ENCODE measurements at regions of chr16 and their contacts with region 1.

Region 1: GRCh38 chr16:15487336-15488284 is 53.2 kb downstream of the BMERB1 start:
- DNase-seq: no peak
- H3K4me3 ChIP-seq: no peak overlapping the region
- H3K27ac ChIP-seq: peak overlapping the region in 1 of 2 donors; percentile 83
- H3K4me1 ChIP-seq: peaks cover 5 to 23% of the 10 kb centered on the region in 2 donors
- H3K27me3 ChIP-seq: no peaks in the 10 kb centered on the region
- CTCF ChIP-seq: no peak

Region 2: GRCh38 chr16:15434425-15435215 is 53.0 kb before region 1 on chr16 and contains the start of gene BMERB1:
- intact Hi-C with region 1: loop called (anchors 2 kb)
- DNase-seq: peak; percentile 18 to 90
- H3K4me3 ChIP-seq: peak within 1 kb of the TSS; percentile 52 to 94
- H3K27ac ChIP-seq: peak within 1 kb of the TSS; percentile 82
- H3K4me1 ChIP-seq: peaks cover 0 to 10% of the 10 kb centered on the region in 2 donors
- H3K27me3 ChIP-seq: no peaks in the 10 kb centered on the region
- CTCF ChIP-seq: no peak
- total RNA-seq, gene BMERB1: 45.4 TPM

Region 3: GRCh38 chr16:15440852-15441251 is 46.8 kb before region 1 on chr16:
- intact Hi-C with region 1: loop called (anchors 2 kb)
- DNase-seq: no peak
- H3K4me3 ChIP-seq: no peak overlapping the region
- H3K27ac ChIP-seq: peak overlapping the region; percentile 27 to 80
- H3K4me1 ChIP-seq: peaks cover 0 to 26% of the 10 kb centered on the region in 2 donors
- H3K27me3 ChIP-seq: no peaks in the 10 kb centered on the region
- CTCF ChIP-seq: no peak

Region 4: DNA sequence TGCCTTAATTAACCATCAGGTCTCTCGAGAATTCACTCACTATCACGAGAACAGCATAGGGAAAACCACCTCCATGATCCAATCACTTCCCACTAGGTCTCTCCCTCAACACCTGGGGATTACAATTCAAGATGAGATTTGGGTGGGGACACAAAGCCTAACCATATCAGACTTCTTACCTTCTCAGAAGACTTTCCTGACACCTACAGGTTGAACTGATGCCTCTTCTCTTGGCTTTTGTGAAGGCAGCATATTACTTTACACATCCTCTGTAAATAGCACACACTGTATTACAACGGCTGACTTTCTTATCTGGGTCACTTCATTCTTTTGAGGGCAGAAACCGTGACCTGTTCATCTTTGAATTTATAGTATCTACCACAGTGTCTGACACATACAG is 29.7 kb before region 1 on chr16:
- intact Hi-C with region 1: no loop called
- DNase-seq: no peak
- H3K4me3 ChIP-seq: no peak overlapping the region
- H3K27ac ChIP-seq: no peak overlapping the region
- H3K4me1 ChIP-seq: peaks cover 0 to 9% of the 10 kb centered on the region in 2 donors
- H3K27me3 ChIP-seq: no peaks in the 10 kb centered on the region
- CTCF ChIP-seq: no peak

Region 5: DNA sequence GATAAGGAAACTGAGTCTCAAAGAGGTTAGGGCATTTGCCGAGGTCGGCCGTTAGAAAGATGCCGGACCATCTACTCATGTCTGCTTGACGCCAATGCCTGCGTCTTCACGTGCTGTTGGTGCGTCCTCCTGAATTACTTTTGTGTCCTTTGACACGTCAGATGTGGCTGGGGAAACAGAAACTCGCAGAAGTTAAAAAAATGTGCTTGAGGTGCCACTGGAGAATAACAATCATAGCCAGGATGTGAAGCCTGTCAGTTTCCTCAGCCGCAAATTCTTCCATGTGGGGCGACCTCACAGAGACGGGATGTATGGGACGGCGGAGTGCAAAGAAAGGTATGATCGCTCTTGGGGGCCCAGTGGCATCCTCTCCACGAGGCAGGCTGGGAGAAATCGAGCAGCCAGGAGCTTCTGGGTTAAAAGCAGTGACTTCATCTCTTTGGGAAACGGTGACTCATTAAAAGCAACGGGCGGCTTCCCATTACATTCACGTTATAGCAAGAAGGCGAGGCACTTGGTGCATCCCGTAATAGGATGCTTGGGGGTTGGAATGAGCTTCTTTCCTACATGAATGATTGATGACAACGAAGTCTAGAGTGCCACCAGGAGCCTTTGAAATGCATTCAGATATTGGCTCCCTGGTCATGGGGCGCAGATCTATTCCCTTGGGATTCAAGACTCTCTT is 14.6 kb after region 1 on chr16:
- intact Hi-C with region 1: loop called (anchors 1 kb)
- DNase-seq: peak in 1 of 2 donors; percentile 70
- H3K4me3 ChIP-seq: no peak overlapping the region
- H3K27ac ChIP-seq: peak overlapping the region; percentile 41 to 42
- H3K4me1 ChIP-seq: peaks cover 0 to 4% of the 10 kb centered on the region in 2 donors
- H3K27me3 ChIP-seq: no peaks in the 10 kb centered on the region
- CTCF ChIP-seq: no peak

Region 6: DNA sequence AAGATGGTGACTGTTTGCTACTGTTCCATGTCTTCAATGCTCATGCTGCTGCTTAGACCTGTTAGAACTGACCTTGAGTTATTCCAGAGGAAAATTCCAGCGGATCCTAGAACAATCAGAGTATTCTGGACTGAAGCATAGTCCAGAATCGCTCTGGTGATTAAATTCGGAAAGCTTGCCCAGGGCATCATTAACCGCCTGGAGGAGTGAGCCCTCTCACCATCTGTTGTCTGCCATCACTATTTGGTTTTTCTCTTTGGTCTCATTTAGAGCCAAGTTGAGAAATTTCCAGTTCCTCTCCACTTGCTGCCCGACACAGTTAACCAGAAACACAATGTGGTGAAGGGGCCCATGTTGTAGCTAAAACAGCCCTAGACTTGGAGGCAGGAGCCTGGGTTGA is 50.9 kb after region 1 on chr16:
- intact Hi-C with region 1: no loop called
- DNase-seq: no peak
- H3K4me3 ChIP-seq: no peak overlapping the region
- H3K27ac ChIP-seq: no peak overlapping the region
- H3K4me1 ChIP-seq: no peaks in the 10 kb centered on the region
- H3K27me3 ChIP-seq: no peaks in the 10 kb centered on the region
- CTCF ChIP-seq: no peak

Region 7: DNA sequence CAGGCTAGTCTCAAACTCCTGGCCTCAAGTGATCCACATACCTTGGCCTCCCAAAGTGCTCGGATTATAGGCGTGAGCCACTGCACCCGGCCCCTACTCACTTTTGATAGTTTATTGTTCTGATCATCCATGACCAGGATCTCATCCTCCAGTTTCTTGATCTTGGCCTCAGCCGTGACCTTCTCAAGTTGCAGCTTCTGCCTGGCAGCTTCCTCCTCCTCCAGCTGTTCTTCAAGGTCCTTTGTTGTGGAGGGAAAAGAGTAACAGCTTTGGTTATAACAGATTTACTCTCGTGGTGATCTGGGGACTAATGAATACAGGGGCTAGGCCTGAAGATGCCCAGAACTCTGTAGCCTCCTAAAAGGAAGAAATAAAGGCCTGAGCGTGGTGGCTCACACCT is 252.3 kb after region 1 on chr16:
- intact Hi-C with region 1: no loop called
- DNase-seq: no peak
- H3K4me3 ChIP-seq: no peak overlapping the region
- H3K27ac ChIP-seq: no peak overlapping the region
- H3K4me1 ChIP-seq: no peaks in the 10 kb centered on the region
- H3K27me3 ChIP-seq: no peaks in the 10 kb centered on the region
- CTCF ChIP-seq: no peak